K562 (cell line): ENCODE measurements at regions of chr7 and their contacts with region 1.

Region 1: GRCh38 chr7:86904949-86905834 is 154.3 kb downstream of the ELAPOR2 start:
- DNase-seq: peak; percentile 20 to 50 (median 29)
- ATAC-seq: peak; percentile 86
- H3K4me3 ChIP-seq: no peak overlapping the region
- H3K27ac ChIP-seq: no peak overlapping the region
- H3K4me1 ChIP-seq: no peaks in the 10 kb centered on the region
- H3K27me3 ChIP-seq: no peaks in the 10 kb centered on the region
- CTCF ChIP-seq: peak; percentile 43 to 74 (median 62); a peak in 5 of 6 replicates
- EP300 ChIP-seq: no peak
- POLR2A ChIP-seq: no peak
- RAD21 ChIP-seq: peak; percentile 32 to 53; a peak in 3 of 4 replicates

Region 2: GRCh38 chr7:85890244-85890811 is 1014.9 kb before region 1 on chr7:
- CTCF ChIA-PET with region 1: no interaction called
- POLR2A ChIA-PET with region 1: no interaction called
- in situ Hi-C with region 1: no loop called
- intact Hi-C with region 1: loop called (anchors 2 kb)
- DNase-seq: peak in 2 of 4 experiments; percentile 14 to 16
- ATAC-seq: no peak
- H3K4me3 ChIP-seq: no peak overlapping the region
- H3K27ac ChIP-seq: no peak overlapping the region
- H3K4me1 ChIP-seq: no peaks in the 10 kb centered on the region
- H3K27me3 ChIP-seq: no peaks in the 10 kb centered on the region
- CTCF ChIP-seq: peak in 2 of 3 experiments; percentile 11 to 55; a peak in 3 of 6 replicates
- EP300 ChIP-seq: no peak
- POLR2A ChIP-seq: no peak
- RAD21 ChIP-seq: peak; percentile 61 to 75

Region 3: GRCh38 chr7:86469680-86470295 is 435.4 kb before region 1 on chr7:
- CTCF ChIA-PET with region 1: no interaction called
- POLR2A ChIA-PET with region 1: no interaction called
- in situ Hi-C with region 1: no loop called
- intact Hi-C with region 1: loop called (anchors 10 kb)
- DNase-seq: peak; percentile 50 to 77 (median 58)
- ATAC-seq: peak; percentile 91
- H3K4me3 ChIP-seq: no peak overlapping the region
- H3K27ac ChIP-seq: no peak overlapping the region
- H3K4me1 ChIP-seq: no peaks in the 10 kb centered on the region
- H3K27me3 ChIP-seq: no peaks in the 10 kb centered on the region
- CTCF ChIP-seq: peak; percentile 56 to 81 (median 71)
- EP300 ChIP-seq: no peak
- POLR2A ChIP-seq: no peak
- RAD21 ChIP-seq: peak; percentile 83 to 85

Region 4: DNA sequence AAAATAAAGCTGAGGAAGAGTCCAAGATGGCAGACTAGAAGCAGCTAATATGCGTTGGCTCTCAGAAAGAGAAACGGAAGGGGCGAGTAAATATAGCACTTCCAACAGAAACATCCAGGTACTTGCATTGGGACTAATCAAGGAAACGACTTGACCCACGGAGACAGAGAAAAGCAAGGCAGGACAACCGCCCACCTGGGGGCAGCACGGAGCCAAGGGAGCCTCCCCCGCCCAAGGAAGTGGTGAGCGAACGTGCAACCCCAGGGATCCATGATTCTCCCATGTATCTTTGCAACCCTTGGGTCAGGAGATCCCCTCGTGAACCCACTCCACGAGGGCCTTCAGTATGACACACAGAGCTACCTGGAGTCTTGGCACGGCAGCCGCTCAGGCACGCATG is 306.9 kb before region 1 on chr7:
- CTCF ChIA-PET with region 1: no interaction called
- POLR2A ChIA-PET with region 1: no interaction called
- in situ Hi-C with region 1: no loop called
- intact Hi-C with region 1: loop called (anchors 10 kb)
- DNase-seq: peak in 2 of 4 experiments; percentile 16 to 36
- ATAC-seq: peak; percentile 74
- H3K4me3 ChIP-seq: no peak overlapping the region
- H3K27ac ChIP-seq: no peak overlapping the region
- H3K4me1 ChIP-seq: no peaks in the 10 kb centered on the region
- H3K27me3 ChIP-seq: no peaks in the 10 kb centered on the region
- CTCF ChIP-seq: peak; percentile 21 to 45 (median 25); a peak in 3 of 6 replicates
- EP300 ChIP-seq: no peak
- POLR2A ChIP-seq: no peak
- RAD21 ChIP-seq: peak; percentile 28 to 50; a peak in 3 of 4 replicates

Region 5: DNA sequence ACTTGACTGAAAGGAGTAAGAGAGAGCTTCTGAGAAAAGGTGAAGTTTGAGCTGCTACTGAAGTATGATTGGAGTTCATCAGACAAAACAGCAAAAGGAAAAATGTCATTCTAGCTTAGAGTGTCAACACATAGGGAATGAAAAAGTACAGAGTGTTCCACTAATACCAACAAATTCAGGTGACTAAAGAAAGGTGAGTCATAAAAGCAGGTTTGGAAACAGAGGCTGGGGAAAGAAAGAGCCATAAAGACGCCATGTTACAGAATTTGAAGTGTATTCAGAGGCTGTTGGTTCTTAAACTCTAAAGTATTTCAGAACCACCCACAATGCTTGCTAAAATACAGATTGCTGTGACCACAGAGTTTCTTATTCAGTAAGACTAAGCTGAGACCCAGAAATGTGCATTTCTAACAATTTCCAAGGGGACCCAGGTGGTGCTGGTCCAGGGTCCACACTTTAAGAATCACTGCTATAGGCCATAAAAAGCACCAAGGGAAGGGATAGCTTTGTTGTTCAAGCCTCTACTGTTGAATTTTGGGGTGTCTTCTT is 11.2 kb after region 1 on chr7:
- CTCF ChIA-PET with region 1: no interaction called
- POLR2A ChIA-PET with region 1: no interaction called
- in situ Hi-C with region 1: no loop called
- intact Hi-C with region 1: no loop called
- DNase-seq: no peak
- ATAC-seq: no peak; the same call in 2 of the 3 replicates
- H3K4me3 ChIP-seq: no peak overlapping the region
- H3K27ac ChIP-seq: no peak overlapping the region; the same call in 2 of the 3 replicates
- H3K4me1 ChIP-seq: no peaks in the 10 kb centered on the region
- H3K27me3 ChIP-seq: no peaks in the 10 kb centered on the region
- CTCF ChIP-seq: no peak
- EP300 ChIP-seq: no peak
- POLR2A ChIP-seq: no peak
- RAD21 ChIP-seq: no peak

Region 6: DNA sequence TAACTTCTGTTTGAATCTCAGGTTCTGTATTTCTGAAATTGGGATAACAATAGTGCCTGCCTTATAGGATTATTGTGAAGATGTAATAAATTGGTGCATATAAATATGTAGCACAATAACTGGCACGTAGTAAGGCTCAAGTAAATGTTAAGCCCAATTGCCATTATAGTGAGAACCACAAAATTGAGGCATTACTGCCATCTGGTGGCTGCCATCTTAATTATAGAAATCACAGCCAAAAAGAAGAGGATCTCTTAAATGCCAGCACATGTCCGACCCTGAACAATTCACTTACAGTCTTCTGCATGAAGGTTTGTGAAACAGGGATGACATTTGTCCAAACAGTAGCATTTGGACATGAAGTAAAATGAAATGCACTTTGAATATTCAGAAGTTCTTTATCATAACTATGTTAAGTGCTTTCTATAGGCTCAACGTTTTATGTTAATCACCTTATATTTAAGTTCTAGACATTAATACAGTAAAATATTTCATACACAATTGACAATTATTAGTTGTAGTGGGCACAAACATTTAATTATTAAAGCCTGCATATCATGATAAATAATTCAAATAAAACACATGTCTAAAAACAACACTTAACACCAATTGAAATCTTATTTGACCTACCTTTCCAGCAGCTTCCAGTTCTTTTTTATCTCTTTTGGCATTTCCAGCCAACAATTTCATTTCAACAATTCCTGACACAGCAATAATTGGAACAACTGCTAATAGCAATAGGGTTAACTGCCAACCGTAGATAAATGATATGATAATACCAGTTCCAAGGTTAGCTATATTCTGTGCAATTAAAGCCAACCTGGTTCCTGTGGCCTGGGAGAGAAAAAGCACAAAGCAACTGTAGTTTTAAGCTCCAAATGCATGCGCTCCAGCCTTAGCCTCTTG is 511.7 kb after region 1 on chr7:
- CTCF ChIA-PET with region 1: no interaction called
- POLR2A ChIA-PET with region 1: no interaction called
- in situ Hi-C with region 1: loop called (anchors 25 kb)
- intact Hi-C with region 1: loop called (anchors 10 kb)
- DNase-seq: peak; percentile 47 to 81 (median 53)
- ATAC-seq: peak; percentile 90
- H3K4me3 ChIP-seq: no peak overlapping the region
- H3K27ac ChIP-seq: no peak overlapping the region
- H3K4me1 ChIP-seq: no peaks in the 10 kb centered on the region
- H3K27me3 ChIP-seq: no peaks in the 10 kb centered on the region; a peak in 1 of 5 replicates
- CTCF ChIP-seq: peak; percentile 67 to 93 (median 78)
- EP300 ChIP-seq: no peak
- POLR2A ChIP-seq: no peak
- RAD21 ChIP-seq: peak; percentile 99